ENCODE measurements at regions of chr2 and their contacts with region 1.

Region 1: DNA sequence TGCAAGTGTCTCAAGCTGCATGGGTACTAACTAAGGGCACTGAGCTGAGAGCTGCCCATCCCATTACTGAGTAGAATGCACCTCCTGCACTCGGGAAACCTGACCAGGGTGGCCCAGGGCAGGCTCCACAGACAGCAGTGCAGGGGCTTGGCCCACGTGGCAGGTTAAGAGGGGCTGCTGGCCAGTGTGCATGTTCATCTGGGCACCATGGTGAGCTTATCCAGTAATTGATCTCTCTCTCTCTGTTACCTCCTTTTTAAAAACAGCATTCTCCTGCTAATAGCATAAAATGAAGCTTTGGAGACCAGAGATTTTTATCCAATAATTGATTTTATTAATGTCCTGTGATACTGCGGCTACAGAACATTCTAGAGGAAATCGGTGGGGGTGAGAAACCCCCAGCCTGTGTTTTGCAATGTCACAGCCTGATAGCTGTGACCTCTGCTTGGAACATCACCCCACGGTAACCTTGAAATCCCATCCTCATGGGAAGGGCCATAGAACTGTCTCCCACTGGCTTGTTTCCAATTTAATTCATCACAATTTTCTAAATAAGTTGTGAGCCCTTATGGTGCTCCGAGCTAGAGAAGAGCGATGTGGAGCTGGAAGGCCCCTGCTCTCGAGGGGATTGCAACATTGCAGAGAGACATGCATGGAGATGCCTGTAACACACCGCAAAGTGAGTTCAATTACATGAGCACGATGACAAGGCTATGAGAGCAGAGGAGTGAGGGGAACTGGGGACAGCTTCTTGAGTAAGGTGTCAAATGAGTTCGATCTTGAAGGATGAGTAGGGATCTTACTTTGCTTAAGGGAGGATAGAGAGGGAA is 143.8 kb downstream of the GALNT14 start:
- DNase-seq: no peak
- ATAC-seq: no peak
- H3K4me3 ChIP-seq: no peak overlapping the region
- H3K4me3 Mint-ChIP-seq: no peak overlapping the region
- H3K27ac ChIP-seq: no peak overlapping the region
- H3K27ac Mint-ChIP-seq: no peak overlapping the region
- H3K4me1 ChIP-seq: no peaks in the 10 kb centered on the region
- H3K4me1 Mint-ChIP-seq: no peaks in the 10 kb centered on the region
- H3K27me3 ChIP-seq: no peaks in the 10 kb centered on the region
- H3K27me3 Mint-ChIP-seq: peaks cover 0 to 7% (median 0%) of the 10 kb centered on the region in 5 donors

Region 2: DNA sequence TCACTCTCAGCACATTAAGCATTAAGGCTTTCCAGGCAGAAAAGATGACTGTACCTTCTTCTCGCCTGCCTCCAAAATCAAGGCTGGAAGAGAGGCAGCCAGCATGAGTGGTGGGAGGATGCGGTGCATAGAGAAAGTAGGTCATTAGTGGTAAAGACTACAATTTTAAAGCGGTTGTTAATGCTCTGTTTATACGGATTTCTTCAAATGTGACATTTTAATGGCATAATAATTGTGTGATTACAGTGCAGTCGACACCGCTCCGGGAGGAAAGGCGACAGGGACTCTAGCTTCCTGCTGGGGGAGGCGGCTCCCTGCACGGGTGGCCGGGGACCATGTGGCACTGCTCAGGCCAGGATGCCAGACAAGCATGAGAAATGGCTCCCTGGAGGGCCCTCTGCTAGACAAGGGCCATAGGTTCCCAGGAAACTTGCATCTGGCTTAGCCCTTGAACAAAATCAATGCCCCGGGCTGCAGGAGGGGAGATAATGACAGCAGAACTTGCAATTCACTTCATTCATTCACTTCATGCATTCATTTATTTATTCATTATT is 14.2 kb after region 1 on chr2:
- CTCF ChIA-PET with region 1: no interaction called
- POLR2A ChIA-PET with region 1: no interaction called
- intact Hi-C with region 1: loop called in 1 of 2 experiments (anchors 1 kb)
- DNase-seq: no peak
- ATAC-seq: no peak
- H3K4me3 ChIP-seq: no peak overlapping the region
- H3K4me3 Mint-ChIP-seq: no peak overlapping the region
- H3K27ac ChIP-seq: no peak overlapping the region
- H3K27ac Mint-ChIP-seq: no peak overlapping the region
- H3K4me1 ChIP-seq: no peaks in the 10 kb centered on the region
- H3K4me1 Mint-ChIP-seq: peaks cover 0 to 2% (median 0%) of the 10 kb centered on the region in 7 donors
- H3K27me3 ChIP-seq: no peaks in the 10 kb centered on the region
- H3K27me3 Mint-ChIP-seq: peaks cover 6 to 21% (median 11%) of the 10 kb centered on the region in 5 donors

Measured in naive thymus-derived CD4-positive, alpha-beta T cell (primary cell).